Calu3 (cell line): ENCODE measurements at regions of chr20 and their contacts with region 1.

Region 1: GRCh38 chr20:58306421-58307276 is 2.9 kb upstream of the RAB22A start:
- DNase-seq: peak; percentile 77
- H3K4me3 Mint-ChIP-seq: peak overlapping the region; percentile 91
- H3K27ac Mint-ChIP-seq: peak overlapping the region; percentile 68
- H3K4me1 Mint-ChIP-seq: peaks cover 21% of the 10 kb centered on the region
- H3K27me3 Mint-ChIP-seq: no peaks in the 10 kb centered on the region
- CTCF ChIP-seq: no peak

Region 2: DNA sequence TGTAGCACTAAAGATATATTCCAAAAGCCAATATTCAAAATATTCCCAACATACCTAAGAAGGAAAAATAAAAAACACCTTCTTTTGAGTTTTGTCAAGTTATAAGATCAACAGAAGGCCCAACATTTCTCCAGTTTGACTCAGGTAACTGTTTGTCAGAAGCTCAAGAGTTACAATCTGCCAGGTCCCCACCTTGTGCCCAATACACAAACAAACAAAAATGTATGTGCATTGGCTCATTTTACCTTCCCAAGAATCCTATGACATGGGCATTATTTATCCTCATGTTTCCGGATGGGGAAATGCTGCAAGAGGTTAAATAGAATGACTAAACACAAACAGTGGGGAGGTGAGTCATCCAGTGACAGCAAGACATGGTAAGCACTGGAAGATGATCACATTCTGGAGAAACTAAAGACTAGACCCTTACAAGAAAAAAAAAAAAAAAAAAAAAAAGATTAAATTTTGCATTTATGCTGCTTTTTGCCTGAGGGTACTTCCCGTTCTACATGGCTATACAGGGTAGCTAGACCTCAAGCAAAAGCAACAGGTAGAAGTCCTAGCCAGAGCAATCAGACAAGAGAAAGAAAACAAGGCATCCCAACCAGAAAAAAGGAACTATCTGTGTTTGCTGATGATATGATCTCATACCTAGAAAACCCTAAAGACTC is 54.6 kb before region 1 on chr20:
- CTCF ChIA-PET with region 1: no interaction called
- intact Hi-C with region 1: loop called (anchors 2 kb)
- DNase-seq: peak; percentile 58
- H3K4me3 Mint-ChIP-seq: no peak overlapping the region
- H3K27ac Mint-ChIP-seq: peak overlapping the region; percentile 76
- H3K4me1 Mint-ChIP-seq: peaks cover 29% of the 10 kb centered on the region
- H3K27me3 Mint-ChIP-seq: no peaks in the 10 kb centered on the region
- CTCF ChIP-seq: no peak